Naive thymus-derived CD8-positive, alpha-beta T cell (primary cell): ENCODE measurements at regions of chr20 and their contacts with region 1.

Region 1: DNA sequence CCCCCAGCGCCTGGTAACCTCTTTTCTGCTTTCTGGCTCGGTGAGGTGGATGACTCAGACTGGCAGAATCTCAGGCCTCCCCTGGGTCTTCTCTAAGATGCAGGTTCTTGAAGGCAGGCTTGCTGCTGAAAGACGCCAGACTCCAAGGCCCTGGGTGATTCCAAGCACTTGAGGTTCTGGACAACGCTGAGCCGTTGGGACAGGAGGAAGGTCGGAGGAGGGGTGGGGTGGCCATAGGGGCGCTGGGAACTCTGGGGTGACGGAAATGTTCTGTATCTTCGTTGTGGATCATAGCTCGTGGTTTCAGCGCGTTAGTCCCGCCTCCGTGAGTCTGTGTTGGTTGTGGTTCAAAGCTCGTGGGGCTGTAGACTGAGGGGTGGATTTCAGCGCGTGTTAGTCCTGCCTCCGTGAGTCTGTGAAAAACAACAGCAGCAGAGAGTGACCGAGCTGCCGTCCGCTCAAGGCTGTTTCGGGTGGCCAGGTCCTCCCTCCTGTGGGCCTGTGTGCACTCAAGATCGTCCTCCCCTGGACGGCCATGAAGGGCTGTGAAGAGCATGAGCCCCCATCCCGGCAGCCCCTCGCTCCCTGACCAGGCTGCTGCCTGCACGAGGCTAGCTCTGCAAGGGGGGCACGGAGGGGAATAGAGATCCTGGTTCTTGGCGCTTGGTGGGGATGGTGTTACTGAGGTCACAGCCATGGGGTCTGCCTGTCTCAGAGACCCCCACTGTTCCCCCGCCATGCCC is 7.7 kb downstream of the NTSR1 start:
- DNase-seq: peak in 9 of 10 donors; percentile 27 to 73 (median 40)
- ATAC-seq: peak; percentile 99
- H3K4me3 Mint-ChIP-seq: peak overlapping the region; percentile 38 to 85 (median 74)
- H3K27ac Mint-ChIP-seq: peak overlapping the region; percentile 74 to 94 (median 89)
- H3K4me1 Mint-ChIP-seq: peaks cover 10 to 35% (median 16%) of the 10 kb centered on the region in 4 donors
- H3K27me3 Mint-ChIP-seq: peaks cover 0 to 3% (median 0%) of the 10 kb centered on the region in 5 donors

Region 2: DNA sequence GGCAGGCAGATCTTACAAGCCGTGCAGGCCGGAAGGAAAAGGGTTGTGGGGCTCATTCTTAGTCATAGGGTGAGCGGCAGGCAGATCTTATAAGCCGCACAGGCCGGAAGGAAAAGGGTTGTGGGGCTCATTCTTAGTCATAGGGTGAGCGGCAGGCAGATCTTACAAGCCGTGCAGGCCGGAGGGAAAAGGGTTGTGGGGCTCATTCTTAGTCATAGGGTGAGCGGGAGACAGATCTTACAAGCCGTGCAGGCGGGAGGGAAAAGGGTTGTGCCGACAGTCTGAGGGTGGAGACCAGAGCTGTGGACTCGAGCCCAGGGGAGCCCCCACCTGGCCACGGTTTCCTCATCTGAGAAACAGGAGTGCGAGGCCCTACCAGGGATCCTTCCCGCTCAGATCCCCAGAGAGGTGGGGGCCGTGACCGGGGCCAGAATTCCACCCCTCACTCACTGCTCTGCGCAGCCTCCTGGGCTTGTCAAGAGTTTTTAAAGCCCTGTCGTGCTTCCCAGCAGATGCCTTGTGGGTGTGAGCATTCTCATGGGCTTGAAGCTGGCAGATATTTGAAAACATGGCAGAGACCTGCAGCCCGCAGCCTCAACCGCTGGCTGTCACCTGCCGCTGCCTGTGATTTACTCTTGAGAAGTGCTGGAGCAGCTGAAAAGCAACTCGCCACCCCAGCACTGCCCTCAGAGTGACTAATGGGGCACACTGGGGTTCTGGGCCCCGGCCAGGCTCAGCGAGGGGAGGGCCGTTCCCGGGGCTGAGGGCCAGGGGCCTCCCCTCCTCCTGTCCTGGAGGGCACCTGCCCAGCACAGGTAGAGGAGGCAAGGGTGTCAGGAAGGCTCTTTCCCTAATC is 24.1 kb after region 1 on chr20:
- POLR2A ChIA-PET with region 1: interaction called, 11 read pairs
- DNase-seq: peak in 9 of 10 donors; percentile 44 to 84 (median 66)
- ATAC-seq: peak; percentile 82 to 84
- H3K4me3 Mint-ChIP-seq: peak overlapping the region; percentile 65 to 89 (median 84)
- H3K27ac Mint-ChIP-seq: peak overlapping the region; percentile 63 to 95 (median 88)
- H3K4me1 Mint-ChIP-seq: peaks cover 8 to 54% (median 30%) of the 10 kb centered on the region in 4 donors
- H3K27me3 Mint-ChIP-seq: peaks cover 0 to 8% (median 4%) of the 10 kb centered on the region in 5 donors